Activated T-helper 1 cell treated with anti-CD3 and anti-CD28 coated beads, Interleukin-12 subunit alpha, Interleukin-12 subunit beta, Interleukin-2, Interleukin-4 antibody, amounts not matched to agents 30 ng/mL and 10 ng/mL and 1 ng/mL, durations not matched to agents 14 hours and 24 hours and 36 hours (primary cell): ENCODE measurements at regions of chr15 and their contacts with region 1.

Region 1: DNA sequence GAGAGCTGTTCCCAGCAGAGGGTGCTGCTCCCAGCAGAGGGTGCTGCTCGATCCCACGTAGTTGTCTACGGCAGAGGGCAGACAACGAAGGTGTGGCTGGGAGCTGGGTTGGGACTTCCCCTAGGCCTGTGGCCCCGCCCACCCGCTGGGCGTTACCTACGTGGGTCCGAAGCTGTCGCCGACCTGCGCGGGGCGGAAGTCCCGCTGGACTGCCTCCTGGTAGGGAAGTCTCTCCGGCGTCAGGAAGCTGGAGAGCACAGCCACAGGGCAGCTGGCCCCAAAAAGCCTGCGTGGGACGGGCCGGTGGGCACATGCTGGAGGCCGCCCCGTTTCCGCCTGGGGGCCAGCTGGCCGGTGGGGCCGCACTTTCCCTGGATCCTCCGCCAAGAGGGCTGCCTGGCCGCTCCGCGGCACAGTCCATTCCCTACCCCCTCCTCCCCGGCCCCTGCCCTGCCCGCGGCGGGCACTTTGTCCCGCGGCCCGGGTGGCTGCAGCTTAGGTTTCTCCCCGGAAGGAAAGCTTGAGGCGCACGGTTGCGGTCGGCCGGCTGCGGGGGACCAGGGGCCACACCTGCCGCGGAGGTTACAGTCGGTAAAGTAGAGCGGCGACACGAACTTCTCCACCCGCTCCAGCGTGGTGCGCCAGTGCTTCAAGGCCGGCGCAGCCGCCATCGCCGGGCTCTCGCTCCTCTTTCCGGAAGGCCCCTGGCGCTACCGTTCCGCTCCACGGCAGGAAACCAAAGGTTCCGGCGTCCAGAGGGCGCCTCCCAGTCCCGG is at the start of gene MAN2C1:
- DNase-seq: peak; percentile 91
- H3K4me3 Mint-ChIP-seq: peak within 1 kb of the TSS; percentile 94
- H3K27ac Mint-ChIP-seq: peak within 1 kb of the TSS; percentile 92
- H3K4me1 Mint-ChIP-seq: peaks cover 16% of the 10 kb centered on the region
- H3K27me3 Mint-ChIP-seq: no peaks in the 10 kb centered on the region
- total RNA-seq, gene MAN2C1: 250 and 254 TPM in 2 replicates

Region 2: GRCh38 chr15:75335705-75336355 is 32.3 kb before region 1 on chr15 and contains the start of gene COMMD4:
- intact Hi-C with region 1: loop called (anchors 1 kb)
- DNase-seq: peak; percentile 81
- H3K4me3 Mint-ChIP-seq: peak within 1 kb of the TSS; percentile 98
- H3K27ac Mint-ChIP-seq: peak within 1 kb of the TSS; percentile 95
- H3K4me1 Mint-ChIP-seq: peaks cover 21% of the 10 kb centered on the region
- H3K27me3 Mint-ChIP-seq: peaks cover 2% of the 10 kb centered on the region
- total RNA-seq, gene COMMD4: 79.8 and 79.9 TPM in 2 replicates

Region 3: DNA sequence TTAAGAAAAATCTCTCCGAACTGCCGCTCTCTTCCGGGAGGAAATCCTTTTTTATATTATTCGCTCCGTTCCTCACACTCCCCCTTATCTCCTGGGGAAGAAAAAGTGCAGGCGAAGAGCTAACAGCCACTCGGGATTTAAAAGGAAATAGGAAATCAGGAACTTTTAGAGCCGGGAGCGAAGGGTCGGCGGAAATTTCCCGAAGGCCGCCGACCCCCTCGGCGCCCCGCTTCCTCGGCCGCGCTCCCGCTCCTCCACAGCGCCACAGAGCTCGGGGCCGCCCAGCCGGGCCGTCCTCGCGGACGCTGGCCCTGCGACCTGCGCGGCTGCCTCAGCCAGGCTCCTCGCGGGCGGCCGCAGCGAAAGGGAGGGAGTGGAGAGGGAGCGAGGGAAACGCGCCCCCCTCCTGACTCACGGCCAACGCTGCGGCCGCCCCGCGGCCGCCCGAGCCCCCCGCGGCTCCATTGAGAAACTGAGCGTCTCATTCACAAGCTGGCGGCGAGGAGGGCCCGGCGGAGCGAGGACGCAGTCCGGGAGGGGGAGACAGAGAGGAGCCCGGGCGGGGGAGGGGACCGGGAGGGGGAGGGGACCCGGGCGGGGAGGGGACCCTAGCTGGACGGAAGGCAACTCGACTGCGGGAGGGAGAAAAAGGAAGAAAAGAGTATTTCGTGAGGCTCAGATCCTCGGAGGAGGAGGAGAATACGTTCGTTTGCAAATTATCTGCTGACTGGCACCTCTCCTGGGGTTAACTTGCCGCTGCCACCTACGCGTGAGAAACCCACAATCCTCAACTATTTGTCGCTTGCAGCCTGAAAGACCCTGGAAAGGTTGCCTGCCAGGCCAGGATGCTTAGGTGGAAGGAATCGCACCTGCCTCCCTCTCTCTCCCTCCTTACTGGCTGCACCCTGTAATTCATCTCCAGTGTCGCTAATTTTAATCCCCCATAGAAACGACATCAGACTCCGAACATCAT is 211.1 kb after region 1 on chr15 and contains the start of gene PTPN9:
- intact Hi-C with region 1: loop called (anchors 1 kb)
- DNase-seq: peak; percentile 57
- H3K4me3 Mint-ChIP-seq: peak within 1 kb of the TSS; percentile 95
- H3K27ac Mint-ChIP-seq: peak within 1 kb of the TSS; percentile 91
- H3K4me1 Mint-ChIP-seq: peaks cover 23% of the 10 kb centered on the region
- H3K27me3 Mint-ChIP-seq: no peaks in the 10 kb centered on the region
- total RNA-seq, gene PTPN9: 28.0 and 31.7 TPM in 2 replicates

Region 4: DNA sequence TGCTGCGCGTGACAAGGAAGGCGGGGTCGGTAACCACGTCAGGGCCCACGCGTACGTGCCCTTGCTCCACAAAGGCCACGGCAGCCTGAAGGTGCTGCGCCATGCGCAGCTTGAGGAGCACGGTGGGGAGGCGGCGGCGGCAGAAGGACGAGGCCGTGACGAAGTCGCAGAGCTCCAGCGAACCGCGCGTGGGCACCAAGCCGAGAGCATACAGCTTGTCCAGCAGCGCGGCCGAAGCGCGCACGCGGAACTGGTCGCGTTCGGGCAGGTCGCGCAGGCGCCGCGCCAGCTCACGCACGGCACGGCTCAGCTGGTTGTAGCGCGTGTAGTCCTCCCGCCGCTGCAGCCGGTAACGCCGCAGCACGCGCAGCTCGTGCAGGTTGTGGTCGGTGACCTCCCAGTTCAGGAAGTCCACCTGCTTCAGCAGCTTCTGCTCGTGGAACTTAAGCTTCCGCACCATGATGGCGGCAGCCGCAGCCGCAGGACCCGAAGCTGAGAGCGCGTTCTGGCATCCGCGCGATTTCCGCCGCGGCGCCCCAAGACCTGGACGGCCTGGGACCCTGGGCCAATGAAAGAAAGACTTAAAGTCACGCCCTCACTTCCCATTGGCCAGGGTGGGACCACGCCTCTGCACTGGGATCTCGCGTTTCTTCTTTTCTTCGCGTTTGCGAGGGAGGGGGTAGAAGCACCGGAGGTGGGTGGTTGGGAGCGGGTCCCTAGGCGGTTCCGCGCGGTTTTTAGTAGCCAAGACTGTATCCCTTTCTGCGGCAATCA is 271.8 kb after region 1 on chr15 and contains the start of gene IMP3:
- intact Hi-C with region 1: loop called (anchors 1 kb)
- DNase-seq: peak; percentile 93
- H3K4me3 Mint-ChIP-seq: peak within 1 kb of the TSS; percentile 90
- H3K27ac Mint-ChIP-seq: peak within 1 kb of the TSS; percentile 94
- H3K4me1 Mint-ChIP-seq: peaks cover 39% of the 10 kb centered on the region
- H3K27me3 Mint-ChIP-seq: peaks cover 6% of the 10 kb centered on the region
- total RNA-seq, gene IMP3: 110 and 113 TPM in 2 replicates

Region 5: DNA sequence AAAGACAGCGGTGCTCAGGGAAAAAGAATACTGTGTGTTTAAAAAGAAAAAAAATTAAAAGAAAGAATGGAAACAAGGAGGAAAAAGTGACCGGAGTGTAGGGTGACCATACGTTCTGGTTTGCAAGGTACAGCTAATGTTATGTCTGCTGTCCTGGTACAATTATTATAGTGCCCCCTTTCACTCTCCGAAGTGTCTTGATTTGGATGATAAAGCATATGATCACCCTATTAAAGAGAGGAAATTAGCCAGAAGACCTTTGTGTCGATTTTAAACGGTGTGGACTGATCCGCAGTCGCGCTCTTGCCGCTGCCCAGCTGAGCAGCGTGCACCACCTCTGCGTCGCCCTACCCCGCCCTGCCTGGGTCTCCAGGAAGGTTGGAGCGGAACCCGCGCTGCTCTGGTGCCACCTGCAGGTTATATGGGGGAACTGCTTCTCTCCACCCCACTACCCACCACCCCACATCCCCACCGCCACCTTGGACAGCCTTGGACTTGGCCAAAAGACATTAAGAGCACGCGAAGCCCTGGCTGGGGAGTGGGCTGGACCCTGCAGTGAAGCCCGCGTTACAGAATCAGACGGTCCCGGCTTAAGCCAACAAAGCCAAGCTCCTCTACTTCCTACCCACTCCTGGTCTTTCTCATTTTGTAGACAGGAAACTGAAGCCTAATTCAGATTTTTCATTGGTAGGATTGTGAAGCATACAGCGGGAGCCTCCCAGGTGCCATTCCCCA is 433.9 kb after region 1 on chr15:
- intact Hi-C with region 1: loop called (anchors 5 kb)
- DNase-seq: peak; percentile 74
- H3K4me3 Mint-ChIP-seq: peak overlapping the region; percentile 48
- H3K27ac Mint-ChIP-seq: no peak overlapping the region
- H3K4me1 Mint-ChIP-seq: peaks cover 9% of the 10 kb centered on the region
- H3K27me3 Mint-ChIP-seq: peaks cover 59% of the 10 kb centered on the region